ENCODE measurements at regions of chr15 and their contacts with region 1.

Region 1: DNA sequence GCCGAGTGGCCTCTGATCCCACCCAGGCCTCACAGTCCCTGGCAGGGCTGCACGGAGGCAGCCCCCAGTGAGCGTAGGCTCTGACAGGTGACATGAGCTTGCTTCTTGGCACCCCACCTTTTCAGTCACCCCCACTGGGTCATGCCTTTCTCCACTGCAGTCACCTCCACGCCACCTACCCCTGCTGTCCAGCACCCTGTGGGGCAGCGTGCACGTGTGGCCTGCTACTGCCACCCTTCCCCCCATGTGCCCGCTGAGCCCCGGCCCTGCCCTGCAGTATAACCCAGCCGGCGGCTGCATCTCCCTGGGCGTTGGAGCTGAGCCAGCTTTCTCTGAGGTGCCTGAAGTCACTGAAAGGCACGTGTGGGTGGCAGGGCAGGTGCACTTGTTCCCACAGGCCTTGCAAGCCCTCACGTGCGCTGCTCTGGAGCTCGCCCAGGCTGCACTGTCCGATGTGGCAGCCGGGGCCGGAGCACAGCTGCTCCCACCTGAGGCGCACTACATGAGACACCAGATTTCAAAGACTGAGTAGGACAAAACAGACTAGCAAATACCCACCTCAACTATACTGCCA is 65.6 kb downstream of the NIPA2 start:
- DNase-seq: no peak
- H3K4me3 ChIP-seq: no peak overlapping the region
- CTCF ChIP-seq: no peak
- POLR2A ChIP-seq: no peak

Region 2: GRCh38 chr15:22850055-22850454 is 54.0 kb before region 1 on chr15:
- intact Hi-C with region 1: no loop called
- DNase-seq: no peak
- H3K4me3 ChIP-seq: no peak overlapping the region
- CTCF ChIP-seq: no peak
- POLR2A ChIP-seq: no peak

Region 3: DNA sequence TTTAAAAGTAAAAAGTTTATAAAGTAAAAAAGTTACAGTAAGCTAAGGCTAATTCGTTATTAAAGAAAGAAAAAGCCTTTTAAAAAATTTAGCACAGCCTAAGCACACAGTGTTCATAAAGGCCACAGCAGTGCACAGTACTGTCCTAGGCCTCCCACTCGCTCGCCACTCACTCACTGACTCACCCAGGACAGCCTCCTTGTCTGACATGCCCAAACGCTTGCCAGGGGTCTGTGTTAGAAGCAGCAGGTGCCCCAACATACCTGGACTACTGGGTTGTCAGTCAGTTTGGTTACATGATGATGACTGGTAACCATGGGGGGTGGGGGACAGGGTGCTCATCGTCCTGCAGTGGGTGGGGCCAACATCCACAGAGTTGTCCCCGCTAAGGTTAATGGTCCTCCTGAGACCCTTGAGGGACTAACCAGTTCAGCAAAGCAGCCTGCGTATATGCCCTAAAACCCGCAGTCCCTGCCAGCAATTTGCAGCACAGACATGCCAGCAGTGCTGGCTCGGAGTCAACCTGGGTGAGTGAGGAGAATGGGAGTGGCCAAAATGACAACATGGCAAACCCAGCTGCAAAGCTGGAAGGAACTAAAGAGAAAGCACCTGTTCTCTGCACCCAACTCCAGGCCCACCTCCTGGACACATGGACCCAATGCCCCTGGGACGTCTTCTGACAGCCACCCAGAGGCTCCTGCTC is 26.9 kb after region 1 on chr15:
- intact Hi-C with region 1: loop called (anchors 1 kb)
- DNase-seq: no peak
- H3K4me3 ChIP-seq: no peak overlapping the region
- CTCF ChIP-seq: no peak
- POLR2A ChIP-seq: no peak

Measured in lower leg skin (tissue), 4 donors.